ENCODE measurements at regions of chr20 and their contacts with region 1.

Region 1: DNA sequence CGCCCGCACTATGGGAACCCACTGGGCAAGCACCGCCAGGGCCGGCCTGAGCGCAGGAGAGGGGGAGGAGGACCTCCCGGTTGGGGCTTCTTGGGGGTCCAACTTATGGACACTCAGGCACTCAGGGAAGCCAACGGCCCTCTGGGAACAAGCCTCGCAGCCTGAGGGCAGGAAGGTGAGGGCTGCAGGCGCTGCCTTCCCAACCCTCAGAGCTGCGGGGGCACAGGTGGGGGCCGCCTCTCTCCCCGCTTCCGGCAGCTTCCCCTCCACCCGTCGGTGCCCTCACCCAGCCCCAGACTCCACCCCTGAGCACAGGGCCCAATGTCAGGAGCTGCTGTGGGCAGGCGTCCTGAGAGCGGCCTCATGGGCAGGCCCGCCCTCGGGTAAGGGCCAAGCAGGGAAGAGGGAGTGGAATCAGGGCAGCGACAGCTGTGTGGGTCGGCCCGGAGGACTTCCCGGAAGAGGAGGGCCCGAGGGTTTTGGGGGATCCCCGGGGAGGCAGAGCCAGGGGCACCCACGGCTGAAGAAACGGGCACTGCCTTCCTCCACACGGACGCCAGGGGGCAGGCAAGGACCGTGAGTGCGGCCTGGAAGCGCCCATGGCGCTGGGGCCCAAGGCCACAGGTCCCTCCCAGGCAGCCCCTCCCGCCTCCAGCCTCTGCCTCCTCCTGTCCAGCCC is 488 bp upstream of the PTK6 start:
- DNase-seq: peak; percentile 80 to 95 (median 87)
- ATAC-seq: peak; percentile 84 to 90 (median 87)
- H3K4me3 ChIP-seq: peak overlapping the region in 10 of 12 donors; percentile 15 to 51 (median 38)
- H3K27ac ChIP-seq: peak overlapping the region in 7 of 12 donors; percentile 12 to 91 (median 39)
- H3K4me1 ChIP-seq: peaks cover 0 to 28% (median 13%) of the 10 kb centered on the region in 12 donors
- H3K27me3 ChIP-seq: peaks cover 0 to 41% (median 2%) of the 10 kb centered on the region in 9 donors
- CTCF ChIP-seq: peak; percentile 94 to 98 (median 96)
- POLR2A ChIP-seq: no peak

Region 2: GRCh38 chr20:63377256-63377941 is 160.3 kb before region 1 on chr20:
- intact Hi-C with region 1: no loop called
- DNase-seq: no peak
- ATAC-seq: no peak
- H3K4me3 ChIP-seq: no peak overlapping the region
- H3K27ac ChIP-seq: no peak overlapping the region
- H3K4me1 ChIP-seq: peaks cover 0 to 4% (median 0%) of the 10 kb centered on the region in 12 donors
- H3K27me3 ChIP-seq: peaks cover 11 to 83% (median 28%) of the 10 kb centered on the region in 9 donors
- CTCF ChIP-seq: no peak
- POLR2A ChIP-seq: no peak

Region 3: GRCh38 chr20:63580796-63581461 is 43.3 kb after region 1 on chr20:
- intact Hi-C with region 1: loop called in 3 of 10 experiments (anchors 5 kb)
- DNase-seq: no peak
- ATAC-seq: no peak
- H3K4me3 ChIP-seq: no peak overlapping the region
- H3K27ac ChIP-seq: no peak overlapping the region
- H3K4me1 ChIP-seq: peaks cover 0 to 12% (median 0%) of the 10 kb centered on the region in 12 donors
- H3K27me3 ChIP-seq: peaks cover 0 to 11% (median 0%) of the 10 kb centered on the region in 9 donors
- CTCF ChIP-seq: peak in 10 of 12 donors; percentile 6 to 39 (median 30)
- POLR2A ChIP-seq: no peak

Region 4: GRCh38 chr20:63612276-63612928 is 74.7 kb after region 1 on chr20:
- intact Hi-C with region 1: loop called in 4 of 10 experiments (anchors 2 to 10 kb)
- DNase-seq: peak in 2 of 5 donors; percentile 12 to 29
- ATAC-seq: peak in 3 of 4 donors; percentile 31 to 48 (median 36)
- H3K4me3 ChIP-seq: no peak overlapping the region
- H3K27ac ChIP-seq: peak overlapping the region in 1 of 12 donors; percentile 32
- H3K4me1 ChIP-seq: peaks cover 0 to 14% (median 0%) of the 10 kb centered on the region in 12 donors
- H3K27me3 ChIP-seq: no peaks in the 10 kb centered on the region
- CTCF ChIP-seq: no peak
- POLR2A ChIP-seq: no peak

Region 5: GRCh38 chr20:63657937-63658748 is 120.5 kb after region 1 on chr20 and contains the start of gene RTEL1:
- intact Hi-C with region 1: loop called in 1 of 10 experiments (anchors 5 kb)
- DNase-seq: peak; percentile 94 to 96 (median 95)
- ATAC-seq: peak; percentile 91 to 97 (median 96)
- H3K4me3 ChIP-seq: peak within 1 kb of the TSS; percentile 61 to 91 (median 78)
- H3K27ac ChIP-seq: peak within 1 kb of the TSS; percentile 65 to 98 (median 89)
- H3K4me1 ChIP-seq: peaks cover 3 to 33% (median 21%) of the 10 kb centered on the region in 12 donors
- H3K27me3 ChIP-seq: peaks cover 0 to under 1% (median 0%) of the 10 kb centered on the region in 9 donors
- CTCF ChIP-seq: peak in 1 of 12 donors; percentile 10
- POLR2A ChIP-seq: peak in 1 of 2 donors; percentile 35
- total RNA-seq, gene RTEL1: 3.0 to 17.8 (median 10.1) TPM

Region 6: DNA sequence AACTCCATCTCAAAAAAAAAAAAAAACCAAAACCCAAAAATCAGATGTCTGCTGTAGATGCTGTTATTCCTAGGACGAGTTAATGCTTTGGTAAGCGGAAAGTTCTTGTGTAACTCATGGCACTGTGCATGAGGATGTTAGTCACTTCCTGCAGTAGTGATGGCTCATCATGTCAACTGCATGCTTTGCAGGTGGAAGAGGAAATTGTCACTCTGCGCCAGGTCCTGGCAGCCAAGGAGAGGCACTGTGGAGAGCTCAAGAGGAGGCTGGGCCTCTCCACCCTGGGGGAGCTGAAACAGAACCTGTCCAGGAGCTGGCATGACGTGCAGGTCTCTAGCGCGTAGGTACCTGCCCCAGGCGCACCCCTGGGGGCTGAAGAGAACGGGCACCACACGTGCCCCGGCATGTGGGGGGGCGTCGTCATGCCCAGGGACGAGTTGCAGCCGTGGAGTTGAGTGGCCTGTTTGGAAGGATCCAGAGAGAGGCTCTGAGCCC is 335.9 kb after region 1 on chr20:
- intact Hi-C with region 1: loop called in 4 of 10 experiments (anchors 5 to 10 kb)
- DNase-seq: peak; percentile 60 to 74 (median 61)
- ATAC-seq: peak; percentile 68 to 91 (median 84)
- H3K4me3 ChIP-seq: peak overlapping the region in 1 of 12 donors; percentile 43
- H3K27ac ChIP-seq: peak overlapping the region in 7 of 12 donors; percentile 13 to 92 (median 60)
- H3K4me1 ChIP-seq: peaks cover 0 to 27% (median 4%) of the 10 kb centered on the region in 12 donors
- H3K27me3 ChIP-seq: no peaks in the 10 kb centered on the region
- CTCF ChIP-seq: no peak
- POLR2A ChIP-seq: no peak

Measured in heart left ventricle (tissue), 16 donors.